ENCODE measurements at regions of chr6 and their contacts with region 1.

Region 1: GRCh38 chr6:37207903-37208456 is 38.0 kb downstream of the PIM1 start:
- DNase-seq: peak; percentile 47
- H3K4me3 ChIP-seq: no peak overlapping the region
- H3K27ac ChIP-seq: no peak overlapping the region
- H3K27me3 ChIP-seq: no peaks in the 10 kb centered on the region
- CTCF ChIP-seq: peak; percentile 87

Region 2: GRCh38 chr6:37192666-37193065 is 15.3 kb before region 1 on chr6:
- CTCF ChIA-PET with region 1: interaction called, 13 read pairs
- POLR2A ChIA-PET with region 1: no interaction called
- DNase-seq: no peak
- H3K4me3 ChIP-seq: no peak overlapping the region
- H3K27ac ChIP-seq: no peak overlapping the region
- H3K27me3 ChIP-seq: no peaks in the 10 kb centered on the region
- CTCF ChIP-seq: no peak

Region 3: DNA sequence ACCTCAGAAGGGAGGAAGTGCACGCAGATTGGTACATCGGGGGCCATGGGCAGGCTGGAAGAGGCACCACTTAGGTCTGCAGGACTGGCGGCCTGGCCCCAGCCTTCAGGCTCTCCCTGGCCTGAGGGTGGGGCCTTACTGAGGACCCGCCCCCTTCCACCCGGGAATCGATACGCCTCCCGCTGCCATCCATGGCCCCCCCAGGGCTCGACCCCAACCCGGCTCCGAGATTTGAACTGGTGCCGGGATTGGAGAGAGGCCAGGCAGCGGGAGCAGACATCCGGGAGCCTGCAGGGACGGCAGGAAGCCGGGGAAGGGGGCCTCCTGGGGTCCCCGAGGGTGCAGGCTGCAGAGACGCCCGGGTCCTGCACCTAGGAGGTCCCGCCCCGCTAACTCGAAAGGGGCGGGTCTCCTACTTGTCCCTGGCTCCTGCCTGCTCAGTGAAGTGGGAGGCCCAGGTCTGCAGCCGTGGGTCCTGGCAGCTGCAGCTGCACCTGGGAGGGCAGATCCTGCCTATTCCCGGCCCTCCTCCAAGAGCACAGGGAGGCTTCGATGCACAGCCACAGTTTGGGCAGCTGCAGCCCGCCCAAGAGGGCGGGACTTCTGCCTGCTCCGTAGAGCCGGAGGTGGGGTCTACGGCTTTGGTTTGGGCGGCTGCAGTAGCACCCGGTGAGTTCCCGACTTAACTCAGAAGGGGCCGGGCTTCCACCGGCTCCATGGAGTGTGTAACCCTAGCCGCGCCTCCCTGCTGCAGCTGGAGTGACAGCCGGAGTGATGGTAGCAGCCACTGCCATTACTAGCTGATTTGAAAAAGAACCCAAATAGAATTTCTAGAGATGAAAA is 14.4 kb after region 1 on chr6:
- CTCF ChIA-PET with region 1: interaction called, 21 read pairs
- POLR2A ChIA-PET with region 1: no interaction called
- DNase-seq: no peak
- H3K4me3 ChIP-seq: peak overlapping the region; percentile 60
- H3K27ac ChIP-seq: peak overlapping the region; percentile 39
- H3K27me3 ChIP-seq: no peaks in the 10 kb centered on the region
- CTCF ChIP-seq: no peak

Measured in AG04450 (cell line).